GM10248 (cell line): ENCODE measurements at regions of chr11 and their contacts with region 1.

Region 1: DNA sequence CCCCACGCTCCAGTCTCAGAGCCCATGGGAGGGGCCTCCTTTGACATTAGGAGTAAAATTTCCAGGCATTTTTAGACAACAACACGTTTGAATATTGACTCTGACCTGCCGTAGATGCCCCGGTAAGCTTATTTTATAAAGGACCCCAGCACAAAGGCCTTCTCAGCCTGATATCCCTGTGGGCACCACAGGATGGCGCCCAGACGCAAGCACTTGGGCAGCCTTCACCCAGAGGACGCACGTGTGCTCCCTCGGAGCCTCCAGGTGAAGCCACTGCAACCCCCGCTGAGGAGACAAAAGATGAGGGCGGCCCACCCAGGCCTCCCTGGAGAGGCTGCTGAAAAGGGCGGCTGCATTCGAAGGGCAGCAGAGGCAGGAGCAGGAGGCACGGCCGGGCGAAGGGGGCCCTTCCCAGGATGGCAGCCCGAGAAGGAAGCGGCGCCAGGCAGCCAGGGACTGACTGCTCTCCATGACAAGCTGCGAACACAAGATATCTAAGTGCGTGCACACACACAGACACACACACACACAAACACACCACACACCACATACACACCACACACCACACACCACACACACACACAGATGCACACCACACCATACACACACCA is 15.2 kb upstream of the TH start:
- DNase-seq: no peak
- CTCF ChIP-seq: peak; percentile 42

Region 2: GRCh38 chr11:727859-728748 is 1458.7 kb before region 1 on chr11:
- CTCF ChIA-PET with region 1: no interaction called
- POLR2A ChIA-PET with region 1: no interaction called
- DNase-seq: peak; percentile 93
- CTCF ChIP-seq: peak; percentile 99

Region 3: GRCh38 chr11:2173150-2173693 is 13.6 kb before region 1 on chr11:
- CTCF ChIA-PET with region 1: no interaction called
- POLR2A ChIA-PET with region 1: no interaction called
- DNase-seq: no peak
- CTCF ChIP-seq: peak; percentile 38

Region 4: DNA sequence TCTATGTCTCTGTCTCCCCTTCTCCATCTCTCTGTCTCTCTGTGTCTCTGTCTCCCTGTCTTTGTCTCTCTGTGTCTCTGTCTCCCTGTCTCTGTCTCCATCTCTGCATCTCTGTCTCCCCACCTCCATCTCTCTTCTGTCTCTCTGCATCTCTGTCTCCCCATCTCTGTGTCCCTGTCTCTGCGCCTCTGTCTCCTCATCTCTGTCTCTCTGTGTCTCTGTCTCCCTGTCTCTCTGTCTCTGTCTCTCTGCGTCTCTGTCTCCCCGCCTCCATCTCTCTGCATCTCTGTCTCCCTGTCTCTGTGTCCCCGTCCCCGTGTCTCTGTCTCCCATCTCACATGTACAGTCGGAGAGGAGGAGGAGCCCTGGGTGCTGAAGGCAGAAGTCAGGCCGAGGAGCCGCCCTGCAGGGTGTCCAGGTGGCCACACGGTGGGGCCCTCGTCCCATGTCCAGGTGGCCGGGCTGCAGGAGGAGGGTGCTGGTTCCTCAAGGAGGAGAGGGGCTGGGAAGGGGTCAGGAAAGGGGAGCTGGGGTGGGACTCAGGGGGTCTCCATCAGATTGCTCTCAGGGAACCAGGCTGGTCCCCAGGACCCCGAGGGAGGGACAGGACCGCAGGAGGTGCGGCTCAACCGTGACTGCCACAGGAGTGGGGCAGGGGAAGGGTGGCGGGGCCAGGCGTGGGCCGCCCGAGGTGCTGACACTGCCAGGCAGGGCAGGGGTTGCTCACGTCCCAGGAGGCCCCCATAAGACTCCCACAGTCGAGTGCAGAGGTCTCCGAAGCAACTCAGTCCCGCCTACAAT is 10.4 kb after region 1 on chr11:
- CTCF ChIA-PET with region 1: interaction called, 12 read pairs
- POLR2A ChIA-PET with region 1: no interaction called
- DNase-seq: peak; percentile 82
- CTCF ChIP-seq: peak; percentile 96

Region 5: GRCh38 chr11:2420502-2421225 is 233.9 kb after region 1 on chr11:
- CTCF ChIA-PET with region 1: interaction called, 16 read pairs
- POLR2A ChIA-PET with region 1: no interaction called
- DNase-seq: peak; percentile 92
- CTCF ChIP-seq: peak; percentile 96